ENCODE measurements at regions of chr3 and their contacts with region 1.

Region 1: DNA sequence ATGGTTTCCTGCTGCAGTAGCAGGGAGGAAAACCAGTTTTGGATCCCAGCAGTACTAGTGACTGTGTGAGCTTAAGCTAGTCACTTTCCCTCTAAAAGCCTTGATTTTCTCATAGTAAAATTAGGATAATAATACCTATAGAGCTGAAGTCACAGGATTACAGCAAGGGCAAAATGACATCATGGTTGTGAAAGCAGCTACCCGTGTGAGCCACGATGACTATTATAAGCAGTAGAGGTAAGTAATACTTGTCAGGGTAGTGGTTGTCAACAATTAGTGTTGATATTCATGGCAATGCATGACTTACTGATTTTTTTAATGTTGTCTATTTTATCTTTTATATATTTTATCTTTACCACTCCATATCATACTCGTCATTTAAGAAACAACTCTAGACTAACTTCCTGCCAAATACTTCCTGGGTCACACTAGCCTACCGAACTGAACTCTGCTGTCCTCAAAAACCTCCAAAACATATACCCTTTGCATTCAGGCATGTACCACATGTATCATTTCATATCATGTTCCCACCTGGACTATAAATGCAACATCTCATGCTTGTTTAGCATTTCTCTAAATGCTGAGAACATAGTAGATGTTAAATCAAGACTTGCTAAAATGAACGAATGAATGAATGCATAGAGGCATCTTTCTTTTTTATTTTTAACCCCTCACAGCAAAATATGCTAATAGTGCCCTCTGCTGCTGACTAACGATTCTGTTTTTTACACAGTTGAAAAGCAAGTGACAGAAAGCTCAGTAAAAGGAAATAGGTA is 172.6 kb downstream of the P3H2 start:
- DNase-seq: no peak
- ATAC-seq: no peak
- H3K4me3 ChIP-seq: no peak overlapping the region
- H3K27ac ChIP-seq: no peak overlapping the region
- H3K4me1 ChIP-seq: no peaks in the 10 kb centered on the region
- H3K27me3 ChIP-seq: no peaks in the 10 kb centered on the region

Region 2: GRCh38 chr3:189270248-189270832 is 677.8 kb before region 1 on chr3:
- intact Hi-C with region 1: loop called (anchors 5 to 10 kb)
- DNase-seq: peak; percentile 30 to 65 (median 38)
- ATAC-seq: peak; percentile 63 to 74
- H3K4me3 ChIP-seq: no peak overlapping the region
- H3K27ac ChIP-seq: no peak overlapping the region
- H3K4me1 ChIP-seq: no peaks in the 10 kb centered on the region
- H3K27me3 ChIP-seq: no peaks in the 10 kb centered on the region

Region 3: DNA sequence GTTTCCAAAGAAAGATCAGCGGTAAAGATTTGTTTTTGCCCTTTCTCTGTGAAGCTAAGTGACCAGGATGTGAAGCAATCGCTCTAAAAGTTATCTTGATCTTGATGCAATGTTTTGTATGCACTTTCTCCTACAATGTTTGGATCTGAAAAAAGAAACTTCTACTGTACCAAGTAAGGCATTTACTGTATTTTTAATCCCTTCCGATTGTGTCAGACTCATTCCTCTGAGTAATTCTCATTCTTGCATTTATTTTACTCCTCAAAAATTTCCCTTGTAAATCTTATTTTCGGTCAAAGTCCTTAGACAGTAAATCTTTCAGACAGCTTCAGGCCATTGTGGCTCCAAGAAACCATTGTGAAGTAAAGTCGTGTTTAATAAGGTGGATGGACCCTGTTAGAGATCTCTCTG is 175.1 kb before region 1 on chr3:
- intact Hi-C with region 1: loop called in 1 of 4 experiments (anchors 10 kb)
- DNase-seq: no peak
- ATAC-seq: no peak
- H3K4me3 ChIP-seq: no peak overlapping the region
- H3K27ac ChIP-seq: no peak overlapping the region
- H3K4me1 ChIP-seq: no peaks in the 10 kb centered on the region
- H3K27me3 ChIP-seq: no peaks in the 10 kb centered on the region

Measured in right cardiac atrium (tissue), 5 donors.